Motor neuron (in vitro differentiated cells): ENCODE measurements at regions of chr17 and their contacts with region 1.

Region 1: DNA sequence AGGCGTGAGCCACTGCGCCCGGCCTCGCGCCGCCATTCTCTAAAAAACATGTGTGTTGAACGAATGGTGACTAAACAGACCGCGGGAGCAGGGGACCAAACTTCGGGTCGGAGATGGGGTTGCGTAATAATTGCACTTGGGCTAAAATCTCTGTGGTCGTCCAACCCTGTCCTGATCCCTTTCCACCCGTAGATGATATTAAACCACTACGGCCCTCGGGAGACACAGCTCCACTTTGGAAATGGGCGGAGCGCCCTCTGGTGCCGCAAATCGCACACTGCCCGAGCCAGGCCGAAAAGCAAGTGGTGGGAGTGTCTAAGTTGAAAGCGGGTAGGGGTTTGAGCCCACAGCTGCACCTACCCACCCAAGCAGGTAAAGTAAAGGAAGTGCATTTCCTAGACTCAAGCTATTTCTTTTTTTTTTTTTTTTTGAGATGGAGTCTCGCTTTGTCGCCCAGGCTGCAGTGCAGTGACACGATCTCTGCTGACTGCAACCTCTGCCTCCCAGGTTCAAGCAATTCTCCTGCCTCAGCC is 17.0 kb downstream of the CAVIN1 start:
- ATAC-seq: peak; percentile 22 to 78 (median 66)
- H3K4me3 ChIP-seq: no peak overlapping the region
- H3K27ac ChIP-seq: no peak overlapping the region
- H3K4me1 ChIP-seq: peaks cover 4 to 9% of the 10 kb centered on the region in 2 donors

Region 2: DNA sequence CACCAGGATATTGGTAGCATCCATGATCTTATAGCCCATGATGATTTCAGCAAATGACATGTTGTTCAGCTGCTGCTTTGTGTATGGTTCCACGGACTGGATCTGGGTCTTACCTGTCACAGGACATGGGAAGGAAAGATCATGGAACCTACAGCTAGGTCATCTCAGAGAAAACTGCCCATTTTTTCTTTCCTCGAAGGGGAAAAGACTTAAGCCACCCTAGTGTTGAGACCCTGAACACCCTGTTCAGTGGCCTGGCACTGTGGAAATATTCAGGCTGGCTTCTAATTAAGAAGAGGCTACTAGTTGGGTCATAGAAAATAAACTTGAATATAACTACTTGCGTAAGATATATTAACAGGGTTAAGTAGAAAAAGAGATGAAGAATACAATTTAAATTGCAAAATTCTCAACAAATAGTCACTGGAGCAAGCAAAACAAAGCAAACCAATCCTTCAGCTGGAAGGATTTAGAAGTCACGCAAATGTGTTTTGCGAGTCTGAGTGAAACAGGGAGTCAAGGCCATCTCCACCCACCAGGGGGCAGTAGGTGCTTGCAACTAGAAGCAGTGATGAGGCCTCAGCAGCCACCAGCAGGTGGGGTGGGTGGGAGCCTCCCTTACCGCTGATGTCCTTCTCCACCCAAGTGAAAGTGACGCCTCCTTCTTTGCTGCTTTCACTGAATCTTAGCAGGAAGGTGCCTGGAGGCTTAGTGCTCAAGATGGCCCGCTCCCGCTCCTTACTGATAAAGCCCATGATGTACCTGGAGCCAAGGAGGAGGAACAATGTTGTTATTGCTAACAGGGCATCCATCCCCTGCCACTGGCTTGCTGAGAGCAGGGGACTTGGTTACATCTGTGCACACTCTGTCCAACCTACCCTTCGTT is 83.4 kb before region 1 on chr17:
- in situ Hi-C with region 1: loop called in 2 of 9 experiments (anchors 10 to 25 kb)
- ATAC-seq: peak; percentile 95 to 98 (median 96)
- H3K4me3 ChIP-seq: no peak overlapping the region
- H3K27ac ChIP-seq: no peak overlapping the region
- H3K4me1 ChIP-seq: peaks cover 2 to 5% of the 10 kb centered on the region in 2 donors

Region 3: GRCh38 chr17:42821176-42821575 is 415.1 kb after region 1 on chr17:
- in situ Hi-C with region 1: no loop called
- ATAC-seq: no peak
- H3K4me3 ChIP-seq: no peak overlapping the region
- H3K27ac ChIP-seq: no peak overlapping the region
- H3K4me1 ChIP-seq: peaks cover 8 to 10% of the 10 kb centered on the region in 2 donors